Sigmoid colon (tissue), 7 donors: ENCODE measurements at regions of chr12 and their contacts with region 1.

Region 1: DNA sequence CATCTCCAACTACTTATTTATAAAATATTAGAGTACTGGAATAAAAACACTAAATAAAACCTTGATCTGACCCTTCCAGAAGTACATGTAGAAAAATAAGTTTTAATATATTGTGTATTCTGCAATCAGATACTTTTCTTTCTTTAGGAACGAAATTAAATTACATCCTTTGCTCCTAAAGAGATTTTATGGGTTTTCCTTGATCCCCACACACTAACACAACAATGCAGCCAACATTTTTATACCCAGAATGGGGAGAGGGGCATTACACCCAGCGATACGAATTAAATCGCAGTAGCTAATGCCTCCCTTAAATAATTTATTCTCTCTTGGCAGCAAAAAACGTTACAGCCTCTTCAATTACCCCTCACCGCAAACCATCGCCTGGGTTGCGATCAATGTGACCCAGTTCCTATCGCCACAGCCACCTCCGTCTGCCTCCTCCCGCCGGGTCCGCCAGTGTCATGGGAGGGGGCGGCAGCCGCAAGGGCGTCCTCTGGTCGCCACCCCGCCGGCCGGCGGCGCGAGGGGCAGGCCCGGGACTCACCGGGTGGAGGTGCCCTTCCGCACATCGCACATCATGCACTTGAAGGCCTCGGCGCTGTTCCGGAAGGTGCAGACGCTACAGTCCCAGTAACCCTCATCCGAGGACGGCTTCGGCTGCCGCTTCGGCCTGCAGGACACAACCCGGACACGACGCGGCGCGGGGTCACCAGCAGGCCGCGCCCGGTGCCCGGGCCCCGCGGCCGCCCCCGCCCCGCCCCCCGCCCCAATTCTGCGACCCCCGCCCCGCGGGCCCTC is 796 bp downstream of the YAF2 start:
- DNase-seq: peak; percentile 87
- H3K4me3 ChIP-seq: peak overlapping the region; percentile 65 to 91 (median 88)
- H3K27ac ChIP-seq: peak overlapping the region; percentile 91 to 98 (median 94)
- H3K4me1 ChIP-seq: peaks cover 0 to 42% (median 26%) of the 10 kb centered on the region in 4 donors
- H3K27me3 ChIP-seq: no peaks in the 10 kb centered on the region
- CTCF ChIP-seq: peak in 3 of 4 experiments; percentile 31 to 54 (median 37)
- EP300 ChIP-seq: no peak
- POLR2A ChIP-seq: no peak

Region 2: DNA sequence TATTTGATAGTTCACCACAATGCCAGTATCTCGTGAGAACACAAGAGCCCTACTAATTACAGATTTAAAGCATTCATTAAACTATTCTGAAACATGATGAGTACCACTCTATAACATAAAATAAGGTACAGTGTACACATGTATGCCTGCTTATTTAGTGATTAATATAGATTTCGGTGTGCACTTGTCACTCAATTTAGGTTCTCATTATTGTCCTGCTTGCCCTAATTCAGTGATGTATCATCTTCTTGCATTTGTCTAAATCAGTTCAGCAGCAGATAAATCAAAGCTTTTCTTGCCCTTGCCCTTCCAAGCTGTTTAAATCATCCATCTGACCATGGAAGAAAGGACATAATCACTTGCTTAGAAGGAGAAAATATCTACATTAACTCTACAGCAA is 452.3 kb before region 1 on chr12:
- intact Hi-C with region 1: no loop called
- DNase-seq: no peak
- H3K4me3 ChIP-seq: no peak overlapping the region
- H3K27ac ChIP-seq: no peak overlapping the region
- H3K4me1 ChIP-seq: no peaks in the 10 kb centered on the region
- H3K27me3 ChIP-seq: no peaks in the 10 kb centered on the region
- CTCF ChIP-seq: no peak
- EP300 ChIP-seq: no peak
- POLR2A ChIP-seq: no peak

Region 3: GRCh38 chr12:42144408-42145196 is 92.7 kb before region 1 on chr12 and contains the start of gene GXYLT1:
- intact Hi-C with region 1: loop called (anchors 2 kb)
- DNase-seq: peak; percentile 95
- H3K4me3 ChIP-seq: peak within 1 kb of the TSS; percentile 49 to 78 (median 72)
- H3K27ac ChIP-seq: peak within 1 kb of the TSS; percentile 87 to 90 (median 90)
- H3K4me1 ChIP-seq: peaks cover 0 to 16% (median 10%) of the 10 kb centered on the region in 4 donors
- H3K27me3 ChIP-seq: no peaks in the 10 kb centered on the region
- CTCF ChIP-seq: no peak
- EP300 ChIP-seq: no peak
- POLR2A ChIP-seq: no peak
- total RNA-seq, gene GXYLT1: 8.8 to 14.3 (median 11.5) TPM

Region 4: GRCh38 chr12:42325653-42326474 is 88.6 kb after region 1 on chr12 and contains the starts of genes PPHLN1 and ZCRB1:
- intact Hi-C with region 1: loop called (anchors 2 kb)
- DNase-seq: peak; percentile 91
- H3K4me3 ChIP-seq: peak within 1 kb of the TSS; percentile 65 to 80 (median 72)
- H3K27ac ChIP-seq: peak within 1 kb of the TSS; percentile 82 to 93 (median 90)
- H3K4me1 ChIP-seq: peaks cover 0 to 28% (median 19%) of the 10 kb centered on the region in 4 donors
- H3K27me3 ChIP-seq: no peaks in the 10 kb centered on the region
- CTCF ChIP-seq: peak in 1 of 4 experiments; percentile 12
- EP300 ChIP-seq: no peak
- POLR2A ChIP-seq: peak; percentile 49 to 55
- total RNA-seq, gene PPHLN1: 52.3 to 66.7 (median 59.3) TPM
- total RNA-seq, gene ZCRB1: 34.6 to 63.1 (median 39.0) TPM